CD4-positive, alpha-beta T cell (primary cell): ENCODE measurements at regions of chr12 and their contacts with region 1.

Region 1: GRCh38 chr12:94704452-94705306 is 54.3 kb upstream of the TMCC3 start:
- DNase-seq: no peak
- ATAC-seq: no peak
- H3K4me3 ChIP-seq: no peak overlapping the region
- H3K4me3 Mint-ChIP-seq: no peak overlapping the region
- H3K27ac ChIP-seq: no peak overlapping the region
- H3K27ac Mint-ChIP-seq: no peak overlapping the region
- H3K4me1 ChIP-seq: no peaks in the 10 kb centered on the region
- H3K4me1 Mint-ChIP-seq: no peaks in the 10 kb centered on the region
- H3K27me3 ChIP-seq: no peaks in the 10 kb centered on the region
- H3K27me3 Mint-ChIP-seq: peaks cover 5% of the 10 kb centered on the region
- CTCF ChIP-seq: no peak

Region 2: DNA sequence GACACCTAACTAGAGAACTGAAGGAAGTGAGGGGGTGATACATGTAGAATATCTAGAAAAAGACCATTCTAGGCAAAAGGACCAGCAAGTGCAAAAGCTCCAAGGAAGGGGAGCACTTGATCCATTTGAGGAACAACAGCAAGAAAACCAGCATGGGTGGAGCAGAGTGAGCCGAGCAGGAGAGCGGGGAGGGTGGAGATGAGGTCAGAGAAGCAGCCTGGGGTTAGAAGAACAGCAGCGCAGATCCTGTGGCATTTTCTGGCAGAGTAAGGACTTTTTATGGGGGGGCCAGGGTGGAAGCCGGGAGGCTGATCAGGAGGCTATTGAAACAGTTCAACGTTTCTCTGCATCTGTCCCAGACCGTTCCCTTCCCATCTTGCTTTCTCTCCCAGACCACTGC is 29.8 kb before region 1 on chr12:
- CTCF ChIA-PET with region 1: no interaction called
- POLR2A ChIA-PET with region 1: no interaction called
- intact Hi-C with region 1: no loop called
- DNase-seq: peak in 3 of 14 experiments; percentile 6 to 29 (median 26)
- ATAC-seq: no peak
- H3K4me3 ChIP-seq: no peak overlapping the region
- H3K4me3 Mint-ChIP-seq: no peak overlapping the region
- H3K27ac ChIP-seq: no peak overlapping the region
- H3K27ac Mint-ChIP-seq: no peak overlapping the region
- H3K4me1 ChIP-seq: peaks cover 30% of the 10 kb centered on the region
- H3K4me1 Mint-ChIP-seq: peaks cover 12% of the 10 kb centered on the region
- H3K27me3 ChIP-seq: no peaks in the 10 kb centered on the region
- H3K27me3 Mint-ChIP-seq: peaks cover 5% of the 10 kb centered on the region
- CTCF ChIP-seq: no peak

Region 3: GRCh38 chr12:94980577-94980976 is 275.9 kb after region 1 on chr12:
- CTCF ChIA-PET with region 1: no interaction called
- POLR2A ChIA-PET with region 1: no interaction called
- intact Hi-C with region 1: loop called in 1 of 2 experiments (anchors 5 kb)
- DNase-seq: peak in 3 of 14 experiments; percentile 35 to 65 (median 61)
- ATAC-seq: peak; percentile 87
- H3K4me3 ChIP-seq: no peak overlapping the region
- H3K4me3 Mint-ChIP-seq: peak overlapping the region; percentile 49
- H3K27ac ChIP-seq: no peak overlapping the region
- H3K27ac Mint-ChIP-seq: peak overlapping the region; percentile 84
- H3K4me1 ChIP-seq: peaks cover 44% of the 10 kb centered on the region
- H3K4me1 Mint-ChIP-seq: peaks cover 62% of the 10 kb centered on the region
- H3K27me3 ChIP-seq: no peaks in the 10 kb centered on the region
- H3K27me3 Mint-ChIP-seq: no peaks in the 10 kb centered on the region
- CTCF ChIP-seq: peak; percentile 50

Region 4: GRCh38 chr12:95532851-95533250 is 828.2 kb after region 1 on chr12:
- CTCF ChIA-PET with region 1: no interaction called
- POLR2A ChIA-PET with region 1: no interaction called
- intact Hi-C with region 1: loop called in 1 of 2 experiments (anchors 10 kb)
- DNase-seq: no peak
- ATAC-seq: no peak
- H3K4me3 ChIP-seq: no peak overlapping the region
- H3K4me3 Mint-ChIP-seq: no peak overlapping the region
- H3K27ac ChIP-seq: no peak overlapping the region
- H3K27ac Mint-ChIP-seq: no peak overlapping the region
- H3K4me1 ChIP-seq: no peaks in the 10 kb centered on the region
- H3K4me1 Mint-ChIP-seq: peaks cover 5% of the 10 kb centered on the region
- H3K27me3 ChIP-seq: no peaks in the 10 kb centered on the region
- H3K27me3 Mint-ChIP-seq: no peaks in the 10 kb centered on the region
- CTCF ChIP-seq: no peak